ENCODE measurements at regions of chr13 and their contacts with region 1.

Region 1: GRCh38 chr13:43830497-43830881 is 43.7 kb upstream of the ENOX1 start:
- DNase-seq: no peak
- ATAC-seq: peak in 3 of 4 donors; percentile 30 to 46 (median 43)
- H3K4me3 ChIP-seq: no peak overlapping the region
- H3K27ac ChIP-seq: no peak overlapping the region
- H3K4me1 ChIP-seq: no peaks in the 10 kb centered on the region
- H3K27me3 ChIP-seq: no peaks in the 10 kb centered on the region
- CTCF ChIP-seq: no peak

Region 2: GRCh38 chr13:42864952-42865767 is 965.3 kb before region 1 on chr13:
- intact Hi-C with region 1: loop called in 1 of 2 experiments (anchors 5 kb)
- DNase-seq: no peak
- ATAC-seq: no peak
- H3K4me3 ChIP-seq: no peak overlapping the region
- H3K27ac ChIP-seq: no peak overlapping the region
- H3K4me1 ChIP-seq: no peaks in the 10 kb centered on the region
- H3K27me3 ChIP-seq: peaks cover 0 to 3% (median 0%) of the 10 kb centered on the region in 3 donors
- CTCF ChIP-seq: no peak

Measured in psoas muscle (tissue), 8 donors.